Activated B cell treated with CpG ODN at 0.5 μM for 24 hours (primary cell): ENCODE measurements at regions of chr12 and their contacts with region 1.

Region 1: GRCh38 chr12:66169221-66170170 is at the start of gene TMBIM4:
- DNase-seq: peak; percentile 84
- ATAC-seq: peak; percentile 85
- H3K4me3 Mint-ChIP-seq: peak within 1 kb of the TSS; percentile 98
- H3K27ac Mint-ChIP-seq: peak within 1 kb of the TSS; percentile 100
- H3K4me1 Mint-ChIP-seq: peaks cover 47% of the 10 kb centered on the region
- H3K27me3 Mint-ChIP-seq: no peaks in the 10 kb centered on the region
- CTCF ChIP-seq: no peak
- total RNA-seq, gene TMBIM4: 91.8 and 93.5 TPM in 2 replicates

Region 2: DNA sequence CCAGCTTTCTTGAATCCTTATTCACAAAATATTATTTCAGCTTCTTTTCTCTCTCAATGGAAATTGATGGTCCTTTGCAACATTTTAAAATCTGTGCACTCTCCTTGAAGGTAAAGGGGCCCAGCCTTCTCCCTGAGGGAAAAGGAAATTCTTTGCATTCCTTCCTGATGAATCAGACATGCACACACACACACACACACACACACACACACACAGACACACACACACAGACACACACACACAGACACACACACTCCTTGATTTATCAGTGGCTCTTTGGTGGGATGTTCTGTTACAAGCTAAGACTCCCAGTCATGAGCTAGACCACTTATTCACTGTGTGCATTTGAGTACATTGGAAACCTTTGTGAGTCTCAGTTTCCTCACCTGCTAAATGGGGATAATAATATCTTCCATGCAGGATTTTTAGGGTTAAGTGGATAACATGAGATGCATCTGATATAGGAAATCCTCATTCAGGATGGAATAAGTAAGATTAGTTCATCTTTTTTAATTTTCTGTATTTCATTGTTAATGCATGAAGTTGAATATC is 390.3 kb before region 1 on chr12:
- CTCF ChIA-PET with region 1: no interaction called
- POLR2A ChIA-PET with region 1: no interaction called
- intact Hi-C with region 1: no loop called
- DNase-seq: no peak
- ATAC-seq: no peak
- H3K4me3 Mint-ChIP-seq: no peak overlapping the region
- H3K27ac Mint-ChIP-seq: no peak overlapping the region
- H3K4me1 Mint-ChIP-seq: no peaks in the 10 kb centered on the region
- H3K27me3 Mint-ChIP-seq: peaks cover 13% of the 10 kb centered on the region
- CTCF ChIP-seq: no peak

Region 3: GRCh38 chr12:66130277-66131066 is 39.0 kb before region 1 on chr12 and contains the start of gene LLPH:
- CTCF ChIA-PET with region 1: no interaction called
- POLR2A ChIA-PET with region 1: interaction called, 72 read pairs
- intact Hi-C with region 1: loop called (anchors 1 kb)
- DNase-seq: peak; percentile 78
- ATAC-seq: peak; percentile 94
- H3K4me3 Mint-ChIP-seq: peak within 1 kb of the TSS; percentile 99
- H3K27ac Mint-ChIP-seq: peak within 1 kb of the TSS; percentile 96
- H3K4me1 Mint-ChIP-seq: peaks cover 43% of the 10 kb centered on the region
- H3K27me3 Mint-ChIP-seq: no peaks in the 10 kb centered on the region
- CTCF ChIP-seq: no peak
- total RNA-seq, gene LLPH: 29.5 and 35.5 TPM in 2 replicates

Region 4: GRCh38 chr12:66188584-66189485 is 19.3 kb after region 1 on chr12 and contains the start of gene IRAK3:
- CTCF ChIA-PET with region 1: interaction called, 4 read pairs
- POLR2A ChIA-PET with region 1: interaction called, 34 read pairs
- intact Hi-C with region 1: loop called (anchors 1 kb)
- DNase-seq: peak; percentile 48
- ATAC-seq: peak; percentile 59
- H3K4me3 Mint-ChIP-seq: peak within 1 kb of the TSS; percentile 79
- H3K27ac Mint-ChIP-seq: peak within 1 kb of the TSS; percentile 38
- H3K4me1 Mint-ChIP-seq: peaks cover 34% of the 10 kb centered on the region
- H3K27me3 Mint-ChIP-seq: peaks cover 21% of the 10 kb centered on the region
- CTCF ChIP-seq: no peak
- total RNA-seq, gene IRAK3: 5.6 and 6.6 TPM in 2 replicates

Region 5: GRCh38 chr12:66203820-66204219 is 34.3 kb after region 1 on chr12:
- CTCF ChIA-PET with region 1: no interaction called
- POLR2A ChIA-PET with region 1: interaction called, 28 read pairs
- intact Hi-C with region 1: no loop called
- DNase-seq: no peak
- ATAC-seq: no peak
- H3K4me3 Mint-ChIP-seq: no peak overlapping the region
- H3K27ac Mint-ChIP-seq: peak overlapping the region; percentile 10
- H3K4me1 Mint-ChIP-seq: peaks cover 10% of the 10 kb centered on the region
- H3K27me3 Mint-ChIP-seq: peaks cover 13% of the 10 kb centered on the region
- CTCF ChIP-seq: no peak

Region 6: GRCh38 chr12:66235626-66236281 is 66.3 kb after region 1 on chr12:
- CTCF ChIA-PET with region 1: interaction called, 11 read pairs
- POLR2A ChIA-PET with region 1: interaction called, 53 read pairs
- intact Hi-C with region 1: loop called (anchors 1 kb)
- DNase-seq: no peak
- ATAC-seq: no peak
- H3K4me3 Mint-ChIP-seq: peak overlapping the region; percentile 70
- H3K27ac Mint-ChIP-seq: no peak overlapping the region
- H3K4me1 Mint-ChIP-seq: peaks cover 31% of the 10 kb centered on the region
- H3K27me3 Mint-ChIP-seq: peaks cover under 1% of the 10 kb centered on the region
- CTCF ChIP-seq: no peak

Region 7: GRCh38 chr12:66662729-66663128 is 493.2 kb after region 1 on chr12:
- CTCF ChIA-PET with region 1: no interaction called
- POLR2A ChIA-PET with region 1: interaction called, 4 read pairs
- intact Hi-C with region 1: loop called (anchors 1 kb)
- DNase-seq: no peak
- ATAC-seq: peak; percentile 4
- H3K4me3 Mint-ChIP-seq: peak overlapping the region; percentile 50
- H3K27ac Mint-ChIP-seq: peak overlapping the region; percentile 30
- H3K4me1 Mint-ChIP-seq: peaks cover 46% of the 10 kb centered on the region
- H3K27me3 Mint-ChIP-seq: no peaks in the 10 kb centered on the region
- CTCF ChIP-seq: no peak